Left colon (tissue), 2 donors: ENCODE measurements at regions of chr12 and their contacts with region 1.

Region 1: DNA sequence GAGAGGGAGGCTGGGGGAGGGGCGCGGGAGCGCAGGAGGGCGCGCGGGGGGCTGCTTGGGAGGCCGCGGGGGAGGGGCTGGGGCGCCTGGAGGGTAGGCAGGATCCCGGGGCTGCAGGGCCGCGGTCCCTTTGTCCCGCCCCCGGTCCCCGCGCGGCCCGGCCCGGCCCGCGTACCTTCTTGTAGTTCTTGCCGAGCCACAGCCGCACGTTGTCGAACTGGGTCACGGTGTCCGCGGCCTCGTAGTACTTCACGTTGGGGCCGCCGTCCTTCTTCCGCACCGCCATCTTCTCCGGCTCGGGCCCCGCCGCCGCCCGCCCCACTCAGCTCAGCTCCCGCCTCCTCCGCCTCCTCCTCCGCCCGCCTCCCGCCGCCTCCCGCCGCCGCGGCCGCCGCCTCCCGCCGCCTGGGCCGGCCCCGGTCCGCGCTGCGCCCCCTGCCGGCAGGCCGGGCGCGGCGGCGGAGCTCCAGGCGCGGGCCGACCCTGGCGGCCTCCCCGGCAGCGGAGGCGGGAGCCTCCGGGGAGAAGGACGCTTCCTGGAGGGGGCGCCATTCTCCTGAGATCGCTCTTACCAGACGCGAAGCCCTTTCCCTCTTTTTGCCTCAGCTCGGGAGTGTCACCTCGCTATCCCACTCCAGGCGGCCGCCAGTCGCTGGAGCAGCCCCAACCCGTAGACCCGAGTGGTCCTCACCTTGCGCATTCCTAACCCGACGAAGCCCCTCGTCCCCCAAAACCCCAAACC is at the start of gene SMARCC2:
- DNase-seq: peak; percentile 89 to 96
- ATAC-seq: peak; percentile 80
- total RNA-seq, gene SMARCC2: 81.7 to 85.6 TPM

Region 2: DNA sequence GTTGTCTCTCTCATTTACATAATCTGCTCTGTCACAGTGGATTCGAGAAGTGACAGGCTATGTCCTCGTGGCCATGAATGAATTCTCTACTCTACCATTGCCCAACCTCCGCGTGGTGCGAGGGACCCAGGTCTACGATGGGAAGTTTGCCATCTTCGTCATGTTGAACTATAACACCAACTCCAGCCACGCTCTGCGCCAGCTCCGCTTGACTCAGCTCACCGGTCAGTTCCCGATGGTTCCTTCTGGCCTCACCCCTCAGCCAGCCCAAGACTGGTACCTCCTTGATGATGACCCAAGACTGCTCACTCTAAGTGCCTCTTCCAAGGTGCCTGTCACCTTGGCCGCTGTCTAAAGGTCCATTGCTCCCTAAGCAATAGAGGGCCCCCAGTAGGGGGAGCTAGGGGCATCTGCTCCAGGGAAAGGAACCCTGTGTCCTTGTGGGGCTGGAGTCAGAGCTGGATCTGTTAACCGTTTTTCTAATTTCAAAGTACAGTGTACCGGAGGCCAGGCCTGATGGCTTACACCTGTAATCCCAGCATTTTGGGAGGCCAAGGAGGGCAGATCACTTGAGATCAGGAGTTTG is 104.3 kb before region 1 on chr12:
- intact Hi-C with region 1: no loop called
- DNase-seq: peak; percentile 45 to 47
- ATAC-seq: no peak

Region 3: GRCh38 chr12:56127888-56128669 is 61.3 kb before region 1 on chr12 and contains the start of gene ESYT1:
- intact Hi-C with region 1: loop called in 1 of 2 experiments (anchors 10 kb)
- DNase-seq: peak; percentile 97 to 100
- ATAC-seq: peak; percentile 81
- total RNA-seq, gene ESYT1: 44.4 to 48.6 TPM

Region 4: DNA sequence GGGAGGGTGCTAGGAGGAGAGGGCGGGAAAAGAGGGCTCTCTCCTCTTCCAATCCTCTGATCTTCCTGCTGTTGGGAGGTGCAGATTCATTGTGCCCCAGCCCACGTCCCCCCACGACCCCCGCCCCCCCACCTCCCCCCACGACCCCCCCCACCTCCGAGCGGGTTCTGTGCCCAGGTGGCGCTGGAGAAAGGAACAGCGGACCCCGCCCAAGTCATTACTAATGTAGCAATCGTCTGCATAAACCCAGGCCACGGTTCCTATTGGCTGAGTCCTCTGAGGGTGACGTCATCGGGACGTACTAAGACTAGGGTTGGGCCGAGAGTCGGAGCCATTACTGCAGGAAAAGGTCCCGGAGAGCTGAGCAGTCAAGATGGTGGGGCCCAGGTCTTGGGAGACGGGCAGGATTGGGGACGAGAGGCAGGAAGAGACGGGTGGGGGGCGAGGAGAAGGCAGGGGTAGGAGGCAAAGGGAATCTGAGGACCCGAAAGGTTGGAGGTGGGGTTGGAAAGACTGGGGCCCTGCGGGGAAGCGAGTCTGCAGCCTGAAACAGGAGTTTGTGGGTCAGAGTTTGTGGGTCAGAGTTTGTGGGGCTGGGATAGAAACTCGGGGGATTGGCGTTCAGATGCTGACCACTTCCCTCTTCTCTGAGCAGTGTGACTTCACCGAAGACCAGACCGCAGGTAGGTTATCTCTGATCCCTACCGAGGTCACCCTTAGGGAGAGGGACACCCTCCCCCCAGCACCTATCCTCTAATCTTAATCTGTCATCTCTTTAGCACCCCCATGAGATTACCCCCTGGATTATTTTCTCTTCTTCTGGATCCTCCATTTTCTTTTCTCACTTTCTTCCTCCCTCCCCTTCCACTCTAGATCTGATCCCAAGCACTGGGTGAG is 31.1 kb before region 1 on chr12 and contains the start of gene MYL6:
- intact Hi-C with region 1: loop called in 1 of 2 experiments (anchors 2 kb)
- DNase-seq: peak; percentile 96 to 99
- ATAC-seq: peak; percentile 82
- total RNA-seq, gene MYL6: 1,832 to 2,224 TPM

Region 5: DNA sequence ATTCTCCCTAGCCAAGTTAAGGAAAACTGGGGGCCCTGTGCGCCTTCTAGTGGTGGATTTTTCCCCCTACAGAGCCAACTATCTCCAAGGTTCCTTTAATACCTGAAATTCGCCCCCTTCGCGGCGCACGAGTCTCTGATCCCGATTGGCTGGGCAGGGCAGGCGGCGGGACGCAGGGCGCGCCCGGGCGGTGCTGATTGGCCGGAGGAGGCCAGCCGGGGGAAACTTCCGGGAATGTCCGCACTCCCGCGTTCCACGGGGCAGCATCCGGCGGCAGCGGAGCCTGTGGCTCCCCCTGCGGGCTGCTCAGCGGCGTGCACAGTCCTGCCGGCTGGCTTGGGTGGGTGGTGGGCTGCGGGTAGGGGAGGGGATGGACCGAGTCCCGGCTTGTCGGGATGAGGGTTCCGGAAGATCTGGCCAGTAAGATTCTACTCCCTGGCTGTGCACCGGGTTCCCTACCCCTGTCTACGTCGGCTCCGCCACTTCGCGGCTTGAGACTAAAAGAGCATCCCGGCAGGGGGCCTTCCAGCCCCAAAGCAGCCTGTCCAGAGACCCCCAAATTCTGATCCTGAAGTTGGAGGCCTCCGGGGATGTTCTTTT is 34.9 kb after region 1 on chr12 and contains the start of gene NABP2:
- intact Hi-C with region 1: loop called in 1 of 2 experiments (anchors 2 kb)
- DNase-seq: peak; percentile 98
- ATAC-seq: peak; percentile 74
- total RNA-seq, gene NABP2: 23.2 to 29.5 TPM

Region 6: GRCh38 chr12:56377310-56377988 is 188.1 kb after region 1 on chr12:
- intact Hi-C with region 1: no loop called
- DNase-seq: no peak
- ATAC-seq: no peak